Transverse colon (tissue), 4 donors: ENCODE measurements at regions of chr7 and their contacts with region 1.

Region 1: DNA sequence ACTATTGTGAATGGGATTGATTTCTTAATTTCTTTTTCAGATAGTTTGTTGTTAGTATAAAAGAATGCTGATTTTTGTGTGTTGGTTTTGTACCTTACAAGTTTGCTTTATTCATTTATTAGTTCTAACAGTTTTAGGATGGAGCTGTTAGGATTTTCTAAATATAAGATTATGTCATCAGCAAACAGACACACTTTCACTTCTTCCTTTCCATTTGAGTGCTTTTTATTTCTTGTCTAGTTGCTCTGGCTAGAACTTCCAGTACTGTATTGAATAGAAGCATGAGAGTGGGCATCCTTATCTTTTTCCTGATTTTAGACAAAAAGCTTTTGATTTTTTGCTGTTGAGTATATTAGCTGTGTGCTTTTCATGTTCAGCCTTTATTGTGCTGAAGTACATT is 81.5 kb downstream of the DNAH11 start:
- DNase-seq: no peak
- H3K4me3 ChIP-seq: no peak overlapping the region
- H3K27ac ChIP-seq: no peak overlapping the region
- H3K4me1 ChIP-seq: no peaks in the 10 kb centered on the region
- H3K27me3 ChIP-seq: no peaks in the 10 kb centered on the region
- CTCF ChIP-seq: no peak
- EP300 ChIP-seq: no peak
- POLR2A ChIP-seq: no peak

Region 2: GRCh38 chr7:21566094-21566493 is 58.2 kb before region 1 on chr7:
- in situ Hi-C with region 1: no loop called
- intact Hi-C with region 1: no loop called
- DNase-seq: no peak
- H3K4me3 ChIP-seq: no peak overlapping the region
- H3K27ac ChIP-seq: no peak overlapping the region
- H3K4me1 ChIP-seq: no peaks in the 10 kb centered on the region
- H3K27me3 ChIP-seq: no peaks in the 10 kb centered on the region
- CTCF ChIP-seq: no peak
- EP300 ChIP-seq: no peak
- POLR2A ChIP-seq: no peak

Region 3: GRCh38 chr7:21671859-21672258 is 47.5 kb after region 1 on chr7:
- in situ Hi-C with region 1: no loop called
- intact Hi-C with region 1: loop called (anchors 1 kb)
- DNase-seq: no peak
- H3K4me3 ChIP-seq: no peak overlapping the region
- H3K27ac ChIP-seq: no peak overlapping the region
- H3K4me1 ChIP-seq: no peaks in the 10 kb centered on the region
- H3K27me3 ChIP-seq: no peaks in the 10 kb centered on the region
- CTCF ChIP-seq: no peak
- EP300 ChIP-seq: no peak
- POLR2A ChIP-seq: no peak